H1 (cell line): ENCODE measurements at regions of chr21 and their contacts with region 1.

Region 1: GRCh38 chr21:45554477-45555175 is 12.4 kb upstream of the SLC19A1 start:
- DNase-seq: peak in 1 of 2 experiments; percentile 94
- H3K4me3 ChIP-seq: peak overlapping the region; percentile 15 to 62 (median 48); a peak in 7 of 8 replicates
- H3K27ac ChIP-seq: no peak overlapping the region
- H3K4me1 ChIP-seq: peaks cover 0 to 9% (median 1%) of the 10 kb centered on the region in 4 experiments; a peak in 4 of 7 replicates
- H3K27me3 ChIP-seq: no peaks in the 10 kb centered on the region; a peak in 1 of 7 replicates
- CTCF ChIP-seq: peak in 2 of 3 experiments; percentile 72 to 75; a peak in 3 of 4 replicates
- EP300 ChIP-seq: no peak
- POLR2A ChIP-seq: no peak
- RAD21 ChIP-seq: peak; percentile 55 to 67

Region 2: DNA sequence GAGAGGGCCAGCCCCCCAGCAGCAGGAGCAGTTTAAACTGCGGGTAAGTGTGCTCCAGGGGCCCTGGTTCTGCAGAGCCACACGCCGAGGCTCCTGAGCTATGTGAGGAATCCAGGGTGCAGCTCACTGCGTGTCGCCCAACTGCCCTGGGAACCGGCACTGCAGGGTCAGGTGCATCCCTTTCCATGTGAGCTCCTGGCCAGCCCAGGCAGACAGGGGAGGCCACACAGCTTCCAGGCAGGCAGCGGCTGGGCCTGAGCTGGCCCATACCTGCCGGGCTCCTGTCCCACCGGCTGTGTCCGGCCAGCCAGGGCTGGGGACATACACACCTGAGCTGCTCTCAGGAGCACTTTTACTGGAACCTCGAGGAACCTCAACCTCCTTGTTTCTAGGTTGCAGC is 168.3 kb before region 1 on chr21:
- CTCF ChIA-PET with region 1: no interaction called
- POLR2A ChIA-PET with region 1: no interaction called
- DNase-seq: no peak
- H3K4me3 ChIP-seq: no peak overlapping the region
- H3K27ac ChIP-seq: no peak overlapping the region
- H3K4me1 ChIP-seq: peaks cover 0 to 3% (median 0%) of the 10 kb centered on the region in 4 experiments; a peak in 5 of 7 replicates
- H3K27me3 ChIP-seq: 0 out of 7 replicates have a peak, but pooled peaks cover 0 to 1% (median 0%) of the 10 kb centered on the region in 4 experiments
- CTCF ChIP-seq: no peak
- EP300 ChIP-seq: no peak
- POLR2A ChIP-seq: no peak
- RAD21 ChIP-seq: no peak

Region 3: DNA sequence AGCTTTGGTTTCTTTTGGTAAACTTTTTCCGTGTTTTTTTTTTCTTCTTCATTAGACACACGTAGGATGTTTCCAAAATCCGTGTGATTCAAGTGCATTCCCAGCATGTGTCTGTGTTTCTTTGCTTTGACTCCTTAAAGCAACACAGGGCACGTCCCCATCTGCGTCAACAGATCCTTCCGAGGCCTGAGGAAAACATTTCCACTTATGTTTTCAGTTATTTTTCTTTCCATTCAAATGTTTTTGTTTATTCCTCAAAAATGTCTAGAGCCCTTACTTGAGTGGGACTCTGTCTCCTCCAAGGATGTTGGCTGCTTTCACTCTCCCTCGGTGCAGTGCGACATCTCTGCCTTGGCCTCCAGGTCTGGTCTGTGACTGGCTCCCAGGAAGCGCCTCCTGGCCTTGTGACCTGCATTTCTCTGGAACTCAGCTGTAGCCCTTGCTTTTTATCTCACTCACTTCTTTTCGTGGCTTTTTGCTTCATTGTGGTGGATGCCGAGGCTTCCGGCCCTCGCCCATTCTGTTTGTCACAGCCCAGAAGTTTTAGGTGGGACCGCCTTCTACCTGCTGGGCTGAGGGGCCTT is 18.9 kb after region 1 on chr21:
- CTCF ChIA-PET with region 1: interaction called, 15 read pairs
- POLR2A ChIA-PET with region 1: interaction called, 4 read pairs
- DNase-seq: no peak
- H3K4me3 ChIP-seq: no peak overlapping the region
- H3K27ac ChIP-seq: no peak overlapping the region
- H3K4me1 ChIP-seq: peaks cover 0 to 8% (median 5%) of the 10 kb centered on the region in 4 experiments; a peak in 3 of 7 replicates
- H3K27me3 ChIP-seq: no peaks in the 10 kb centered on the region; a peak in 1 of 7 replicates
- CTCF ChIP-seq: no peak
- EP300 ChIP-seq: no peak
- POLR2A ChIP-seq: no peak
- RAD21 ChIP-seq: no peak

Region 4: GRCh38 chr21:45820171-45821091 is 265.8 kb after region 1 on chr21:
- CTCF ChIA-PET with region 1: interaction called, 20 read pairs
- POLR2A ChIA-PET with region 1: interaction called, 3 read pairs
- DNase-seq: peak; percentile 85 to 89
- H3K4me3 ChIP-seq: no peak overlapping the region
- H3K27ac ChIP-seq: no peak overlapping the region
- H3K4me1 ChIP-seq: peaks cover 0 to 8% (median 1%) of the 10 kb centered on the region in 4 experiments; a peak in 2 of 7 replicates
- H3K27me3 ChIP-seq: no peaks in the 10 kb centered on the region
- CTCF ChIP-seq: peak; percentile 84 to 97 (median 90)
- EP300 ChIP-seq: no peak; a peak in 1 of 3 replicates
- POLR2A ChIP-seq: no peak
- RAD21 ChIP-seq: peak; percentile 96 to 97